ENCODE measurements at regions of chr21 and their contacts with region 1.

Region 1: DNA sequence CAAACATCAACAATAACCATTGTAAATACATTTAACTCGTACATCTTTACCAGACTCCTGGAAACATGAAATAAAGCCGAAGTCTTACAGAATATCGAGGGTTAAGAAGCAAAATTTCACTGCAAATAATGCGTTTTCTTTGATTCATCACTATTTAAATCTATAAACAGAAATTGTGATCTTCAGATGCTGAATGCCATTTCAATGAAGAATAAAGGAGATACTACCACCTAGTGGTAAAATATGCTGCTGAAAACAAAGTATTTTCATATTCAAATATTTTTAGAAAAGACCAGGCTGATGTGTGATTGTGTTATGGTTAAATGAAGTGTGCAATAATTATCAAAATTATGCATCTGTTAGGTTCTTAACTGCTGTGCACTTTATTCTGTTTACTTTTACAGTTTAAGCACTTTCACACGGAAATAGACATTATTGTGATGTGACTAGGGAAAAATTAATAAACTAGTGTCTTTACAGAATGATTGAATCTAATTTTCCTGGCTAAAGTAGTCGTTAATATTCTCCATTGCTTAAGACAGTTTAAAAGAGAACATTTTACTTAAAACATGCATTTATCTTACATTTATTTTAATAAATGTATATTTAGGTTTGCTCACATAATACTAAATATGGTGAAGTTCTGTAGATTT is 1093.1 kb downstream of the MRPL39 start:
- DNase-seq: no peak
- ATAC-seq: no peak
- H3K4me3 ChIP-seq: no peak overlapping the region
- H3K27ac ChIP-seq: no peak overlapping the region
- H3K4me1 ChIP-seq: no peaks in the 10 kb centered on the region
- H3K27me3 ChIP-seq: no peaks in the 10 kb centered on the region
- CTCF ChIP-seq: peak; percentile 23 to 66 (median 44)
- POLR2A ChIP-seq: no peak

Region 2: DNA sequence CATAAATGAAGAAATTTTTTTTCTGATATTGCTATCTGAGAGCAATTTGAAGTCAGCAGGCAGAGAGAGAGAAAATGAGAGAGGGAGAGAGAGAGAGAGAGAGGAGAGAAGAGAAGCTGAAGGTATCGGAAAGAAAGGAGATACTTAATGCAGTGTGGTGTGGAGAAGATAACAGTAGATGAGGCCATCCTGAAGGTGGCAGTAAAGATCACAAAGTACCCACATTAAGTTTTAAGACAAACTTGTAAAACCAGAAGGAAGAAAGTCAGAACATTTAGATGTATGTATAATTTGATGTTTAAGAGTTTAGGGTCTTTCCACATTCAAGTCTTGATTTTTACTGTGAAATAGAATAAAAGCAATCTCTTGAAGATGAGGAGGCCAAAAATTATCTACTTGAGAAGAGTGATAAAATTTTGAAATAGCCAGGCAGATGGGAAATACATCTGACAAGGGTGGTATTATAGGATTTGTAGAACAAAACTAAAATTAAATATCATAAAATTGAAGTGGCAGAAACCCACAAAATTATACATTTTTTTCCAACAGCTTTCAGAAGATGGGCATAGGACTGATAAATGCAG is 660.3 kb before region 1 on chr21:
- intact Hi-C with region 1: loop called in 5 of 10 experiments (anchors 5 to 10 kb)
- DNase-seq: no peak
- ATAC-seq: no peak
- H3K4me3 ChIP-seq: no peak overlapping the region
- H3K27ac ChIP-seq: no peak overlapping the region
- H3K4me1 ChIP-seq: no peaks in the 10 kb centered on the region
- H3K27me3 ChIP-seq: peaks cover 0 to 10% (median 0%) of the 10 kb centered on the region in 9 donors
- CTCF ChIP-seq: peak; percentile 12 to 63 (median 42)
- POLR2A ChIP-seq: no peak

Region 3: DNA sequence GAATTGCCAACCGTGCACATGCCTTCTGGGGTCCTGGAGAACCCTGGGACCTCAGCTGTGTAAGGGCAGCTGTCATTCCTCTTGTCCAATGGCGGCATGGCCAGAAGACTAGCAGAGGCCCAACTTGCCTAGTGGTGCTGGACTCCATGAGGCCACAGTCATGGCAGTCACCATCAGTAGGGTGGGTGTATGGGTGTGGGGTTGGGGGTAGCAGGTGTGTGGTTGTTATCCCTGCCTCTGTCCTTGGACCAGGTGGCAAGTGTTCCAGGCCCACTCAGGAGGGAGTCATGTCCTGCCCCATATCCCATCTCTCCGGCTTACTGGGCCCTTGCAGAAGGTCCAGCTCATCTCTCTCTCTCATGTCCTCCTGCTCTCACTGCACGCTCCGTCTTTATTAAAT is 503.1 kb before region 1 on chr21:
- intact Hi-C with region 1: no loop called
- DNase-seq: no peak
- ATAC-seq: no peak
- H3K4me3 ChIP-seq: no peak overlapping the region
- H3K27ac ChIP-seq: no peak overlapping the region
- H3K4me1 ChIP-seq: no peaks in the 10 kb centered on the region
- H3K27me3 ChIP-seq: no peaks in the 10 kb centered on the region
- CTCF ChIP-seq: no peak
- POLR2A ChIP-seq: no peak

Region 4: GRCh38 chr21:24577301-24577700 is 63.1 kb after region 1 on chr21:
- intact Hi-C with region 1: no loop called
- DNase-seq: no peak
- ATAC-seq: no peak
- H3K4me3 ChIP-seq: no peak overlapping the region
- H3K27ac ChIP-seq: no peak overlapping the region
- H3K4me1 ChIP-seq: no peaks in the 10 kb centered on the region
- H3K27me3 ChIP-seq: no peaks in the 10 kb centered on the region
- CTCF ChIP-seq: no peak
- POLR2A ChIP-seq: no peak